ENCODE measurements at regions of chr12 and their contacts with region 1.

Region 1: GRCh38 chr12:62948123-62948522 is 13.2 kb upstream of the PPM1H start:
- DNase-seq: no peak
- ATAC-seq: no peak
- H3K4me3 ChIP-seq: no peak overlapping the region
- H3K27ac ChIP-seq: no peak overlapping the region
- H3K4me1 ChIP-seq: no peaks in the 10 kb centered on the region
- H3K27me3 ChIP-seq: peaks cover 0 to 4% (median 0%) of the 10 kb centered on the region in 7 donors
- CTCF ChIP-seq: no peak

Region 2: GRCh38 chr12:62660756-62661155 is 287.4 kb before region 1 on chr12:
- intact Hi-C with region 1: loop called in 1 of 10 experiments (anchors 2 kb)
- DNase-seq: no peak
- ATAC-seq: no peak
- H3K4me3 ChIP-seq: no peak overlapping the region
- H3K27ac ChIP-seq: no peak overlapping the region
- H3K4me1 ChIP-seq: peaks cover 0 to 8% (median 0%) of the 10 kb centered on the region in 9 donors
- H3K27me3 ChIP-seq: no peaks in the 10 kb centered on the region
- CTCF ChIP-seq: no peak